Upper lobe of right lung (tissue), 1 donor: ENCODE measurements at regions of chr6 and their contacts with region 1.

Region 1: GRCh38 chr6:129370268-129370916 is 339.6 kb downstream of the ARHGAP18 start:
- DNase-seq: no peak
- ATAC-seq: peak; percentile 33
- H3K4me3 ChIP-seq: no peak overlapping the region
- H3K27ac ChIP-seq: no peak overlapping the region
- H3K4me1 ChIP-seq: peaks cover 7% of the 10 kb centered on the region
- H3K27me3 ChIP-seq: no peaks in the 10 kb centered on the region
- CTCF ChIP-seq: peak; percentile 69

Region 2: GRCh38 chr6:128725271-128726233 is 644.8 kb before region 1 on chr6:
- intact Hi-C with region 1: loop called (anchors 10 kb)
- DNase-seq: no peak
- ATAC-seq: no peak
- H3K4me3 ChIP-seq: no peak overlapping the region
- H3K27ac ChIP-seq: no peak overlapping the region
- H3K4me1 ChIP-seq: no peaks in the 10 kb centered on the region
- H3K27me3 ChIP-seq: no peaks in the 10 kb centered on the region
- CTCF ChIP-seq: peak; percentile 68